ENCODE measurements at regions of chr14 and their contacts with region 1.

Region 1: DNA sequence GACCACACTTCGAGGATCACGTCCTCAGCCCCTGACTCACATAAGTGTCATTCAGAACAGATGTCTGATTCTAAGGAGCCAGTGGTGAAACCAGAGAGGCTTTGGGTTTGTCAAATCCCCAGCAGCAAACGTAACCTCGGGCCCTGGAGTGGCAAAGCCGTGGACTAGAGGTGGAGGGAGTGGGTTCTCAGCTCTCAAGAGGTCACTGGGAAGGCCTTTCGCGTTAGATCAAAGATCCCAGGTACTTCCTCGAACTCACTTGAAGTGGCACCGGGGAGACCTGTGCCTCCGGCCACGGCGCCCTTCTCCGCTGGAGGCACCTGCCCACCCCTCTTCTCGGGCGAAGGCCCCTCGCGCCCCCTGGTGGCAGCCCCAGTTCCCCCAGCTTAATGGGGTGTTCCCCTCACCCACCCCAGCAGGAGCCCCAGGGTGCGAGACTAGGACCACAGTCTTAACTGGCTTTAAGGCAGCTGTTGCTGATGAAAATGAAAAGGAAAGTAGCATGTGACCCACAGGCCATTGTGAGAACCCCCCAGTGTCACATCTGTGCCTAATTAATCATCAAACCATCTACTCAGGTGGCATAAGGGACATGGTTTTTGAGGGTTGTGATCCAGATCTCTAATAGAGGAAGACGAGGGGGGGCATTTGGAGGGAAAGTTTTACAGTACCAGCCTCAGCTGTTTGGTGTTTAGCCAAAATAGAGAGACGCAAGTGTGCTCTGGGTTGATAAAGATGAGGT is 672 bp upstream of the ESR2 start:
- DNase-seq: peak; percentile 78
- ATAC-seq: peak; percentile 84
- H3K4me3 ChIP-seq: peak overlapping the region; percentile 66
- H3K27ac ChIP-seq: no peak overlapping the region
- H3K4me1 ChIP-seq: peaks cover 16% of the 10 kb centered on the region; the same call in 1 of the 2 replicates
- H3K27me3 ChIP-seq: no peaks in the 10 kb centered on the region
- CTCF ChIP-seq: peak; percentile 97

Region 2: GRCh38 chr14:63800651-63801375 is 494.0 kb before region 1 on chr14:
- CTCF ChIA-PET with region 1: no interaction called
- POLR2A ChIA-PET with region 1: no interaction called
- intact Hi-C with region 1: loop called (anchors 1 kb)
- DNase-seq: peak; percentile 19
- ATAC-seq: peak; percentile 33; the same call in 1 of the 2 replicates
- H3K4me3 ChIP-seq: no peak overlapping the region
- H3K27ac ChIP-seq: no peak overlapping the region
- H3K4me1 ChIP-seq: no peaks in the 10 kb centered on the region
- H3K27me3 ChIP-seq: no peaks in the 10 kb centered on the region
- CTCF ChIP-seq: no peak

Region 3: GRCh38 chr14:64005822-64006221 is 289.0 kb before region 1 on chr14:
- CTCF ChIA-PET with region 1: interaction called, 4 read pairs
- POLR2A ChIA-PET with region 1: no interaction called
- intact Hi-C with region 1: loop called (anchors 1 kb)
- DNase-seq: no peak
- ATAC-seq: no peak
- H3K4me3 ChIP-seq: no peak overlapping the region
- H3K27ac ChIP-seq: no peak overlapping the region
- H3K4me1 ChIP-seq: no peaks in the 10 kb centered on the region
- H3K27me3 ChIP-seq: no peaks in the 10 kb centered on the region
- CTCF ChIP-seq: no peak

Region 4: GRCh38 chr14:64137657-64138290 is 157.1 kb before region 1 on chr14:
- CTCF ChIA-PET with region 1: interaction called, 44 read pairs
- POLR2A ChIA-PET with region 1: no interaction called
- intact Hi-C with region 1: loop called (anchors 1 kb)
- DNase-seq: peak; percentile 64
- ATAC-seq: peak; percentile 92
- H3K4me3 ChIP-seq: no peak overlapping the region
- H3K27ac ChIP-seq: no peak overlapping the region
- H3K4me1 ChIP-seq: no peaks in the 10 kb centered on the region
- H3K27me3 ChIP-seq: no peaks in the 10 kb centered on the region
- CTCF ChIP-seq: peak; percentile 78

Region 5: DNA sequence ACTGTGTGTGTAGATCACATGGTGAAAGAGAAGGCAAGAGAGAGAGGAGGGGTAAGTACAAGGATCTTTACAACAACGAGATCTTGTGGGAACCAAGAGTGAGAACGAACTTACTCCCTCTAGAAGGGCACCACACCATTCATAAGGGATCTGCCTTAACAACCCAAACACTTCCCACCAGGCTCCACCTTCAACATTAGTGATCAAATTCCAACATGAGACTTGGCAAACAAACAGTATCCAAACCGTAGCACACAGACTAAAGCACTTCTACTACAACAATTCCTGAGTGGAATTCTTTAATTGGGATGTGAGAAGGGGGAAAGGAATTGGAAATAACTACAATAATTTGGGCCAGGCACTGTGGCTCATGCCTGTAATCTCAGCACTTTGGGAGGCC is 34.3 kb after region 1 on chr14:
- CTCF ChIA-PET with region 1: no interaction called
- POLR2A ChIA-PET with region 1: no interaction called
- intact Hi-C with region 1: no loop called
- DNase-seq: no peak
- ATAC-seq: no peak
- H3K4me3 ChIP-seq: no peak overlapping the region
- H3K27ac ChIP-seq: no peak overlapping the region
- H3K4me1 ChIP-seq: peaks cover 9% of the 10 kb centered on the region
- H3K27me3 ChIP-seq: no peaks in the 10 kb centered on the region
- CTCF ChIP-seq: no peak

Region 6: GRCh38 chr14:64540208-64541157 is 245.6 kb after region 1 on chr14 and contains the start of gene HSPA2:
- CTCF ChIA-PET with region 1: no interaction called
- POLR2A ChIA-PET with region 1: no interaction called
- intact Hi-C with region 1: no loop called
- DNase-seq: peak; percentile 100
- ATAC-seq: peak; percentile 88
- H3K4me3 ChIP-seq: peak within 1 kb of the TSS; percentile 68
- H3K27ac ChIP-seq: peak within 1 kb of the TSS; percentile 73
- H3K4me1 ChIP-seq: peaks cover 27% of the 10 kb centered on the region
- H3K27me3 ChIP-seq: no peaks in the 10 kb centered on the region
- CTCF ChIP-seq: peak; percentile 80
- total RNA-seq, gene HSPA2: 15.7 and 16.5 TPM in 2 replicates

Region 7: GRCh38 chr14:64612021-64612380 is 317.2 kb after region 1 on chr14:
- CTCF ChIA-PET with region 1: no interaction called
- POLR2A ChIA-PET with region 1: interaction called, 12 read pairs
- intact Hi-C with region 1: no loop called
- DNase-seq: peak; percentile 53
- ATAC-seq: peak; percentile 57
- H3K4me3 ChIP-seq: no peak overlapping the region
- H3K27ac ChIP-seq: peak overlapping the region; percentile 43
- H3K4me1 ChIP-seq: peaks cover 30% of the 10 kb centered on the region
- H3K27me3 ChIP-seq: no peaks in the 10 kb centered on the region
- CTCF ChIP-seq: no peak

Measured in PC-3 (cell line).